ENCODE measurements at regions of chr5 and their contacts with region 1.

Region 1: GRCh38 chr5:88140856-88141752 is 127.5 kb downstream of the TMEM161B start:
- DNase-seq: peak; percentile 99
- H3K4me3 ChIP-seq: peak overlapping the region; percentile 60
- CTCF ChIP-seq: peak; percentile 73

Region 2: DNA sequence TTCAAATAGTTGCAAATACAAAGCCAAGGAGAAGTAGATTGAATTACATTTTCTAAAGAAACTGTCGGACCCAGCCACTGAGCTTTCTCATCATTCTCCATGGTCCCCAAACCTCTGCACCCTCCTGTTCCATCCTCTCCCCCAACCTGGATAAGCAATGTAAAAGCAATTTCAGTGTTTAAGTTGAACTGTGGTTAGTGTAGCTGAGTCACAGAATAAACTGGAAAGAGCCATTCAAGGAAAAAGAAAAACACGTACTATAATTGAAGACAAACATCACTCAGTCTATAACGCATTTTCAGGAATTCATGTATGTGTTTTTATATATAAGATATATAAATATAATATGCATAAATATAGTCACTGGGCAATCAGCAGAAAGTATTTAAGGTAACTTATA is 181.7 kb after region 1 on chr5:
- in situ Hi-C with region 1: no loop called
- DNase-seq: peak; percentile 32
- H3K4me3 ChIP-seq: no peak overlapping the region
- CTCF ChIP-seq: no peak

Region 3: GRCh38 chr5:88690409-88691229 is 549.5 kb after region 1 on chr5:
- in situ Hi-C with region 1: loop called (anchors 25 kb)
- DNase-seq: peak; percentile 79
- H3K4me3 ChIP-seq: peak overlapping the region; percentile 30
- CTCF ChIP-seq: peak; percentile 96

Measured in astrocyte of the spinal cord (primary cell).